Activated B cell treated with CpG ODN at 0.5 μM for 24 hours (primary cell): ENCODE measurements at regions of chr7 and their contacts with region 1.

Region 1: DNA sequence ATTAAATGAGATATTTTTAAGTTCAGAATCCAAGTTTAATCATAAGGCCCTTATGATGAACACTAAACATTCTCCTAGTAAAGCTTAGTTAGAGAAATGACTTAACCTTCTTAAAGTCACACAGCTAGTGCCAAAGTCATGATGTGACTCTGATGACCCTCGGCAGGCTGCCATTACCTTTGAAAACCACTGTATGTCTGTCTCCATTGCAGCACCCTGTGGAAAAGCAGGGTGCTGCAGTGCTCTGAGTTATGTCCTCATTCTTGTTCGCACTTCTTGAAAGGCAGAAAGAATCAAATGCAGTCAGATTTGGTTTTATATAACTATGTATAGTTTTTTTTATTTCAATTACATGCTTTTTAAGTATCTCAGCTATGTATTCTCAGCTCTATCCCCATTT is 105.0 kb downstream of the PHTF2 start:
- DNase-seq: no peak
- ATAC-seq: peak; percentile 37
- H3K4me3 Mint-ChIP-seq: no peak overlapping the region
- H3K27ac Mint-ChIP-seq: peak overlapping the region; percentile 96
- H3K4me1 Mint-ChIP-seq: peaks cover 51% of the 10 kb centered on the region
- H3K27me3 Mint-ChIP-seq: no peaks in the 10 kb centered on the region
- CTCF ChIP-seq: no peak

Region 2: DNA sequence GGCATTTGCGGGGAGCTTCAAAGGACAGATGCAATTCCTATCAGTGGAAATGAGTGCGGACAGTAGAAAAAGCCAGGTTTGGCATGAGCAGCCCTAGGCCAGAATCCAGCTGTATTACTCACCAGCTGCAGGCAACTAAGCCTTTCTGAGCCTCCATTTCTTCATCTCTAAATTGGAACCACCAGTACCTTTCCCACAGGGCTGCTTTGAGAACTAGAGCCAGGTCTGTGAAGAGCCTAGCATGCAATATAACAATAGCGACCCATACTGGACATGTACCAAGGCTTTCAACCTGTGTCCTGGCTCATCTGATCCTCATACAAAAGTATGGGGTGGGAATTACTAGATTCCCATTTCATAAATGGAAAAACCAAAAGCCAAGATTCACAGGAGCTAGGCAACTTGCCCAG is 588.4 kb before region 1 on chr7:
- CTCF ChIA-PET with region 1: no interaction called
- POLR2A ChIA-PET with region 1: no interaction called
- intact Hi-C with region 1: no loop called
- DNase-seq: no peak
- ATAC-seq: no peak
- H3K4me3 Mint-ChIP-seq: no peak overlapping the region
- H3K27ac Mint-ChIP-seq: no peak overlapping the region
- H3K4me1 Mint-ChIP-seq: peaks cover 6% of the 10 kb centered on the region
- H3K27me3 Mint-ChIP-seq: no peaks in the 10 kb centered on the region
- CTCF ChIP-seq: no peak

Region 3: DNA sequence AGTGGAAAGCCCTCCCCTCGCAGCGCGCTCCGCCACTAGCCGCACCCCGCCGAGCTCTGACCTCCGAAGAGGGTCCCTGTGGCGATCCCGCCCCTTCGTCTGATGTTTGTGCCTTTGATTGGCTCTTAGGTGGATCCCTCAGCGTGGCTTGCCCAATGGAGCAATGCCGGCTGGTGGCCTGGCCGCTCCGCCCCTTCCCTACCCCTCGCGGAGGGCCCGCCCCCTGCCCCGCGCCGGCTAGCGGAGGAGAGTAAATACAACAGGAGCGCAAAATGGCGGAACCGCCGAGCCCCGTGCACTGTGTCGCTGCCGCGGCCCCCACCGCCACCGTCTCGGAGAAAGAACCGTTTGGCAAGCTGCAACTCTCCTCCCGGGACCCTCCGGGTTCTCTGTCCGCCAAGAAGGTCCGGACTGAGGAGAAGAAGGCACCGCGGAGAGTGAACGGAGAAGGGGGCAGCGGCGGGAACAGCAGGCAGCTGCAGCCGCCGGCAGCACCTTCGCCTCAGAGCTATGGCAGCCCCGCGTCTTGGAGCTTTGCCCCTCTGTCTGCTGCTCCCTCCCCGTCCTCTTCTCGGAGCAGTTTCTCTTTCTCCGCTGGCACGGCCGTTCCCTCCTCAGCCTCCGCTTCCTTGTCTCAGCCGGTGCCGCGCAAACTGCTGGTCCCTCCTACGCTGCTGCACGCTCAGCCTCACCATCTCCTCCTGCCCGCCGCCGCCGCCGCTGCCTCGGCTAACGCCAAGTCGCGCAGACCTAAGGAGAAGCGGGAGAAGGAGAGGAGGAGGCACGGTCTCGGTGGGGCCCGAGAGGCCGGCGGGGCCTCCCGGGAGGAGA is 207.2 kb before region 1 on chr7 and contains the start of gene RSBN1L:
- CTCF ChIA-PET with region 1: no interaction called
- POLR2A ChIA-PET with region 1: interaction called, 8 read pairs
- intact Hi-C with region 1: loop called (anchors 1 kb)
- DNase-seq: peak; percentile 96
- ATAC-seq: peak; percentile 94
- H3K4me3 Mint-ChIP-seq: peak within 1 kb of the TSS; percentile 96
- H3K27ac Mint-ChIP-seq: peak within 1 kb of the TSS; percentile 93
- H3K4me1 Mint-ChIP-seq: peaks cover 54% of the 10 kb centered on the region
- H3K27me3 Mint-ChIP-seq: no peaks in the 10 kb centered on the region
- CTCF ChIP-seq: no peak
- total RNA-seq, gene RSBN1L: 24.5 and 25.9 TPM in 2 replicates

Region 4: GRCh38 chr7:77791336-77791735 is 112.3 kb before region 1 on chr7:
- CTCF ChIA-PET with region 1: no interaction called
- POLR2A ChIA-PET with region 1: no interaction called
- intact Hi-C with region 1: no loop called
- DNase-seq: no peak
- ATAC-seq: no peak
- H3K4me3 Mint-ChIP-seq: no peak overlapping the region
- H3K27ac Mint-ChIP-seq: no peak overlapping the region
- H3K4me1 Mint-ChIP-seq: peaks cover 22% of the 10 kb centered on the region
- H3K27me3 Mint-ChIP-seq: no peaks in the 10 kb centered on the region
- CTCF ChIP-seq: no peak

Region 5: DNA sequence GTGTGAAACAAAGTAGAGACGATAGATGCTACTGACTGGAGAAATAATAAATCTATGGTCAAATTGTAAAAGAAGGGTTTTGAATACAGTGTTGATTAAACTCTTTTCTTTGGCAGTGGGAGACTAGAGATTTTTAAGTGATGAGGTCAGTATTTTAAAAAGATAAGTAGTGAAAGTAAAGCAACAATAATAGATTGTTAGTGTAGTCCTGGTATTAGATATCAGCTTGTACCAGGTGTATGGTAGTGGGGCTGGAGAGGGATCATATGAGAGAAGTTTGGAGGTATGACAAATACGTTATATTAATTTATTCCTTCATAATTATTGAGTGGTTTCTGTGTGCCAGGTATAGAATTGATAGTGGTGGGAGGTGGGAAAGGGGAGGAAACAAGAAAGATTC is 79.8 kb before region 1 on chr7:
- CTCF ChIA-PET with region 1: no interaction called
- POLR2A ChIA-PET with region 1: interaction called, 13 read pairs
- intact Hi-C with region 1: loop called (anchors 1 kb)
- DNase-seq: no peak
- ATAC-seq: peak; percentile 35
- H3K4me3 Mint-ChIP-seq: peak overlapping the region; percentile 83
- H3K27ac Mint-ChIP-seq: peak overlapping the region; percentile 97
- H3K4me1 Mint-ChIP-seq: peaks cover 81% of the 10 kb centered on the region
- H3K27me3 Mint-ChIP-seq: no peaks in the 10 kb centered on the region
- CTCF ChIP-seq: no peak

Region 6: DNA sequence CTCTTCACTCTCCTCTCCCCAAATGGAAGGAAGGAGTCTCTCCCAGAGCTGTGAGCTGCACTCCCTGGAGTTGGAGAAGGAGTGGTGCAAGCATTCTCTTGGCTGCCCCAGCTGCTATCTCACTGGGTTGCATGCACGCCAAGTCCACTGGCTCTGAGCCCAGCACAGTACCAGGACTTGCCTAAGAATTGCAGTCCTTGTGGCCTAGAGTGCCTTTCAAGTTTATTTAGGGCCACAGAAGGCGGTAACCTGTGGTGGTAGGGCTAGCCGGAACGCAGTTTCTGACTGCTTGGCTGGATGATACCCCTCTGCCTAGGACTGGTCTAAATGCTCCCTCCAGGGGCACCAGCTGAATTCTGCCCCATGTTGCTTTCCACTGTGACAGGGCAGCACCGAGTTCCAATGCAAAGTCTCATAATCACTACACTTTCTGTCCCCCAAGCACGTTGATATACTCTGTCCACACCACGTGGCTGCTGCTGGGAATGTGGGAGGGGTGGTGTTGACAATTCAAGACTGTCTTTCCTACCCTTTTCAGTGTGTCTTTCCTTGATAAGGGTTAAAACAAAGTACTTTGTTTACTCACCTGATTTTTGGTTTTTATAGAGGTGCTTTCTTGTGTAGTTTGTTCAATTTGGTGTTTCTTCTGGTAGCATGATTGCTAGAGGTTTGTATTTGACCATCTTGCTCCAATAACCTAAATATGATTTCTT is 48.1 kb before region 1 on chr7:
- CTCF ChIA-PET with region 1: no interaction called
- POLR2A ChIA-PET with region 1: no interaction called
- intact Hi-C with region 1: loop called (anchors 1 kb)
- DNase-seq: no peak
- ATAC-seq: no peak
- H3K4me3 Mint-ChIP-seq: no peak overlapping the region
- H3K27ac Mint-ChIP-seq: no peak overlapping the region
- H3K4me1 Mint-ChIP-seq: peaks cover 72% of the 10 kb centered on the region
- H3K27me3 Mint-ChIP-seq: no peaks in the 10 kb centered on the region
- CTCF ChIP-seq: no peak

Region 7: GRCh38 chr7:77888998-77889397 is 14.6 kb before region 1 on chr7:
- CTCF ChIA-PET with region 1: no interaction called
- POLR2A ChIA-PET with region 1: no interaction called
- intact Hi-C with region 1: loop called (anchors 1 kb)
- DNase-seq: no peak
- ATAC-seq: no peak
- H3K4me3 Mint-ChIP-seq: no peak overlapping the region
- H3K27ac Mint-ChIP-seq: no peak overlapping the region
- H3K4me1 Mint-ChIP-seq: peaks cover 44% of the 10 kb centered on the region
- H3K27me3 Mint-ChIP-seq: no peaks in the 10 kb centered on the region
- CTCF ChIP-seq: no peak